ENCODE measurements at regions of chr4 and their contacts with region 1.

Region 1: GRCh38 chr4:176902710-176903323 is 110.1 kb upstream of the VEGFC start:
- DNase-seq: peak; percentile 60
- H3K4me3 Mint-ChIP-seq: peak overlapping the region; percentile 34
- H3K27ac Mint-ChIP-seq: peak overlapping the region; percentile 49
- H3K4me1 Mint-ChIP-seq: peaks cover 10% of the 10 kb centered on the region
- H3K27me3 Mint-ChIP-seq: peaks cover 8% of the 10 kb centered on the region

Region 2: DNA sequence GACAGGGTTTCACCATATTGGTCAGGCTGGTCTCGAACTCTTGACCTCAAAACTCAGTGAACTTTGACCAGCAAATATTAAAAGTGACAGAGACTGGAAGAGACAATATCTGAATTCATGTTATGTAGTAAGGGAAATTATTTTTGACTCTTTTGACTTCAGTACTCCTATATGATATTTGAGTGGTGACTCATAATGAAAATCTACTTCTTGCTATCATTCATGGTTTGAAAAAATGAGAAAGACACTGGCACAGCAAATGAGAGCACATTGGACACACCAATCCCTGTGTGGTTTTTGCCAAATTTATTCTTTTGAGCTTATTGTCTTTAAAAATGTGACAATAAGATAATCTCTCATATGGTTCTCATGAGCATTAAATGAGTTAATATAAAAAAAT is 1200.1 kb before region 1 on chr4:
- intact Hi-C with region 1: no loop called
- DNase-seq: no peak
- H3K4me3 Mint-ChIP-seq: no peak overlapping the region
- H3K27ac Mint-ChIP-seq: no peak overlapping the region
- H3K4me1 Mint-ChIP-seq: no peaks in the 10 kb centered on the region
- H3K27me3 Mint-ChIP-seq: no peaks in the 10 kb centered on the region

Region 3: DNA sequence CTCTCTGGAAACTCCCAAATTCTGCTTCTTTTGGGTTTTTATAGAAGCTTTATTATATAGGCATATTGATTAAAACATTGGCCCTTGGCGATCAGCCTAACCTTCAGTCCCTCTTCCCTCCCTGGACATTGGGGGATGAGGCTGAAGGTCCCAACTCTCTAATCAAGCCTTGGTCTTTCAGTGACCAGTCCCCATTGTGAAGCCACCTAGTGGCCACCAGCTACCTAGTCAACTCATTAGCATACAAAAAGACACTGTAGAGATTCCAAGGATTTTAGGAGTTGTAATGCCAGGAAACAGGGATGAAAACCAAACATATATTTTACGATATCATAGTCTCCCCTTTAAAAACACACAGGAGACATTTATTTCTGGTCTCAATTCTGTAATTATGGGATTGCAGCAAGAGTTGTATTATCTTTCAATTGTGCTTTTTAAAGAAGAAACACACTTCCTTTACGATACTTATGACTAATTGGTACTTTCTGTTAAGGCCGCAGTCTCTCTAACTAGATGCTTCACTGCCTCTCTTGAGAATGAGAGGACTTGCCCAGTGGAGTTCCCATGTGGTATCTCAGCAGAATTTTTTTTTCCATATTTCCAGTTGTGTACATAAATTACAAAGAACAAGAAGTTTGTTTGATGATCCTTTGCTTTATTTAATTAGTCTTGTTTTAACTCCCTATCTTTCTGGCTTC is 779.0 kb before region 1 on chr4:
- intact Hi-C with region 1: loop called (anchors 2 kb)
- DNase-seq: no peak
- H3K4me3 Mint-ChIP-seq: no peak overlapping the region
- H3K27ac Mint-ChIP-seq: no peak overlapping the region
- H3K4me1 Mint-ChIP-seq: peaks cover 10% of the 10 kb centered on the region
- H3K27me3 Mint-ChIP-seq: no peaks in the 10 kb centered on the region

Measured in activated CD4-positive, alpha-beta T cell treated with anti-CD3 and anti-CD28 coated beads, Interleukin-2, amount 10 ng/mL, durations not matched to agents 24 days and 14 days (primary cell).